K562 (cell line): ENCODE measurements at regions of chr6 and their contacts with region 1.

Region 1: DNA sequence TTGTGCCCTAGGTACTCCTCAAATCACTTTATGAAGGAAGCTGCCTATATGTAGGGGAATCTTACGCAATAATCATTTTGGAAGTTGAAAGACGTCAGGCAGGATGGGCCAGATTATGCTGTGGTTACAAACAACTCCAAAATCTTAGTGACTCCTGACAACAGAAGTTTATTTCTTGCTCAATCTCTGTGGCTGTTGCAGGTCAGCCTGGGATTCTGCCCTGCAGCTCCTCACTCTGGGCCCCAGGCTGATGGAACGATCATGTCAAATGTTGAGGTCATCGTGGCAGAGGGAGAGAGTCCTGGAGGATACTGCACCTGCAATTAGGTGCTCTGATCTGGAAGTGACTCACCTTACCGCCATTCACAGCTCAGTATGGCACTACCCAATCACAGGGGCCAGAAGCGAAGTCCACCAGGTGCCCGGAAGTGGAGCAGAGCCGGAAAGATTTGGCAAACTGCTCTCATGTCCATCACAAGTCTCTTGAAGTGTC is 88.4 kb downstream of the ZDHHC14 start:
- DNase-seq: no peak
- ATAC-seq: no peak
- H3K4me3 ChIP-seq: no peak overlapping the region
- H3K27ac ChIP-seq: no peak overlapping the region
- H3K4me1 ChIP-seq: peaks cover 22 to 23% of the 10 kb centered on the region in 2 experiments; a peak in 4 of 5 replicates
- H3K27me3 ChIP-seq: no peaks in the 10 kb centered on the region
- CTCF ChIP-seq: no peak
- EP300 ChIP-seq: no peak
- POLR2A ChIP-seq: no peak
- RAD21 ChIP-seq: no peak

Region 2: DNA sequence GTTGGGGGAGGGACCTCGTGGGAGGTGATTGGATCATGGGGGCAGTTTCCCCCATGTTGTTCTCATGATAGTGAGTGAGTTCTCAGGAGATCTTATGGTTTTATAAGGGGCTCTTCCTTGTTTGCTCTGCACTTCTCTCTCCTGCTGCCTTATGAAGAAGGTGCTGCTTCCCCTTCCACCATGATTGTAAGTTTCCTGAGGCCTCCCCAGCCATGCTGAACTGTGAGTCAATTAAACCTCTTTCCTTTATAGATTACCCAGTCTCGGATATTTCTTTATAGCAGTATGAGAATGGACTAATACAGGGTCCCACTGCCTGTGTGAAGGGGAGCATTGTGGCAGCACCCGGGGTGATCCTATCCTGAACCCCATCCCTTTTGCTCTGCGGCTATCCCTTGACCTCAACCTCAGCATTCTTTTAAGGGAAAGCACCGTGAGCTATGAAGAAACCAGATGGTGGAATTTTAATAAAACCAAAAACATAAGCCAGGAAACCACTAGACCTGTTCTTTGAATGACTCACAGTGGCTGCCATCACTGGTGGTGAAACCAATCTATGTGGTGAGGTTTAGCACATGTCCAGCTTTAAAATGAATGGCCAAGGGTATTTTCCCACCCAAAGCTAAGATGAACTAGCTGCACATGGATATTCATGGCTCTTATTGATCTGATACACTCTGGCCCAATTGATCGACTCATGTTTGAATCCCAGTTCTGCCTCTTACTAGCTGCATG is 26.2 kb before region 1 on chr6:
- CTCF ChIA-PET with region 1: no interaction called
- POLR2A ChIA-PET with region 1: no interaction called
- in situ Hi-C with region 1: no loop called
- intact Hi-C with region 1: no loop called
- DNase-seq: no peak
- ATAC-seq: no peak
- H3K4me3 ChIP-seq: no peak overlapping the region
- H3K27ac ChIP-seq: no peak overlapping the region
- H3K4me1 ChIP-seq: peaks cover 0 to 4% of the 10 kb centered on the region in 2 experiments; a peak in 2 of 5 replicates
- H3K27me3 ChIP-seq: no peaks in the 10 kb centered on the region
- CTCF ChIP-seq: no peak
- EP300 ChIP-seq: no peak
- POLR2A ChIP-seq: no peak
- RAD21 ChIP-seq: no peak

Region 3: DNA sequence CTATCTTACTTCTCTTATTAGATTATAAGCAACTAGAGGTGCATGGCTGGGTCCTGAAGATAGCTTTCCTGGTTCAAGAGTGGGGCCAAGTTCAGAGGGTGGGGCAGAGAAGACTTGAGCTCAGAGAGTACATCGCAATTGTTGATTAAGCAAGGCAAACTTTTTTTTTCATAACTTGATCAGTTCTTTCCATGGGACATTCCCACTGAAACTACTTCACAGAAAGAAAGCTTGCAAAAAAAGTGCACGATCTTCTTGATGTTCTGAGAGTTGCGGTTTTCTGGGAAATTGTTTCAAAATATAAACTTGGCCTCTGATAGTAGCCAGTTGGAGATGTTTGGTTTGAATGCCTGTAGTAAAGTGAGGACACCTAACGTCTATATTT is 12.4 kb after region 1 on chr6:
- CTCF ChIA-PET with region 1: no interaction called
- POLR2A ChIA-PET with region 1: interaction called, 14 read pairs
- in situ Hi-C with region 1: no loop called
- intact Hi-C with region 1: no loop called
- DNase-seq: no peak
- ATAC-seq: no peak
- H3K4me3 ChIP-seq: no peak overlapping the region
- H3K27ac ChIP-seq: no peak overlapping the region
- H3K4me1 ChIP-seq: peaks cover 10 to 17% of the 10 kb centered on the region in 2 experiments
- H3K27me3 ChIP-seq: no peaks in the 10 kb centered on the region; a peak in 1 of 5 replicates
- CTCF ChIP-seq: no peak
- EP300 ChIP-seq: no peak
- POLR2A ChIP-seq: no peak
- RAD21 ChIP-seq: no peak

Region 4: DNA sequence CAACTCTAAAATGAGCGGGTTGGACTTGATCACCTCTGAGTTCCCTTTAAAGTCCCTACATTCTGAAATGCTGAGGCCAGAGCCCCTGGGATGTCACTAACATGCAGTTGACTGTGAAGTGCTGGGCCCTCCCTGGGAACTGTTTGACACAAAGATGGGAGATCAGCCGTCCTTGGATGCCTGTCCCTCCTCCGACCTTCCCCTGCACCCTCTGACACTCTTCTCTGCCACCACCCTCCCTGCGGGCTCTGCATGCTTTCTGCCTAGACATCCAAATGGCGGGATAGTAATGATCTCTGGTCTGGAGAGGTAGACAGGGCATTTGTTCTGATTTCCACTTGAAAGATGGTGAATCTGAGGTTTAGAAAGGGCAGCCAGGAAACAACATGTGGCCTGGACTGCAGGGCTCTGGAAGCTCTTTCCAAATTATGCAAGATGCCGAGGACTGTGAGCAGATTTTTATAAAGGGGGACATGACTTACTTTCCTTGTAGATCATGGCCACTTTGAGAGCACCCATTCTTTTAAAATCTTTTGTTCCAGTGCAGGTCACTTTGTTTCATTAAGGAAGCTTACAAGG is 24.8 kb after region 1 on chr6:
- CTCF ChIA-PET with region 1: no interaction called
- POLR2A ChIA-PET with region 1: no interaction called
- in situ Hi-C with region 1: no loop called
- intact Hi-C with region 1: no loop called
- DNase-seq: no peak
- ATAC-seq: no peak
- H3K4me3 ChIP-seq: no peak overlapping the region
- H3K27ac ChIP-seq: no peak overlapping the region
- H3K4me1 ChIP-seq: peaks cover 7 to 19% of the 10 kb centered on the region in 2 experiments; a peak in 4 of 5 replicates
- H3K27me3 ChIP-seq: no peaks in the 10 kb centered on the region
- CTCF ChIP-seq: no peak
- EP300 ChIP-seq: no peak
- POLR2A ChIP-seq: no peak
- RAD21 ChIP-seq: no peak